Esophagus squamous epithelium (tissue), 5 donors: ENCODE measurements at regions of chr12 and their contacts with region 1.

Region 1: DNA sequence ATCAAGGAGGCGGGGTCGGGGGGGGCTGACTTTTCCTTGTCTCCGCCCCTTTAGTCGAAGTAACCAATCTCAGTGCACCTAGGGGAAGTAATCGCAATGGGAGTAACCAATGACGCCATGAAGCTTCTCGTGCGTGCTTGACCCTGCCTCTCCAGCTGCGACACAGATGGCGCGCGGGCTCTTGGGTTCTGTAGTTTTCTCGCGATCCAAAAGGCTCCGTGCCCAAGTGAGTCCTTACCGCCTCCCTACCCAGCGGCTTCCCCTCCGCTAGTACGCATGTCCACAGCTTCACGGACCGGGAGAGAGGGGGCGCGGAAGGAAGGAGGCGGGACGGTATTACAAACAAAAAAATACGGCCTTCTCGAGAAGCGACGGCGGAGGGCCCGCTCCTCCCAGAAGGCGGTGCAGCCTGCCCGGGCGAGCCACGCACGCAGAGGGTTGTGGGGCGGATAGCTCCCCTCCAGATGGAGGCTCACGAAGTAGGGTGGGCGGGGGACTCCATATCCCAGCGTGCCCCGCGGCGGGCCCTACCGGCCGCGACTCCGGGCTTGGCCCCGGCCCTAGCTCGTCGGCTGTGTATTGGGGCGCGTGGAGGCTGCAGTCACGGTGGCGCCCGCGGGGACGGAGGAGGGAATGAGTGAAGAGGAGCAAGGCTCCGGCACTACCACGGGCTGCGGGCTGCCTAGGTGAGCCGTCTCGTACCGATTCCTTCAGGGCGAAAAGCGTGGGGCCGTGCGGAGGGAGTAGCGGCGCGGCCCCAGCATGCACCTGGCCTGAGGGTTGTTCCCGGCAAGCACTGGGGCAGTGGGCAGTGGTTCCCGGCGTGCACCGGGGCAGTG is at the start of gene TARBP2:
- DNase-seq: peak; percentile 94
- H3K4me3 ChIP-seq: peak within 1 kb of the TSS; percentile 66 to 88 (median 74)
- H3K27ac ChIP-seq: peak within 1 kb of the TSS; percentile 89 to 99 (median 98)
- H3K4me1 ChIP-seq: peaks cover 26 to 73% (median 32%) of the 10 kb centered on the region in 3 donors
- H3K27me3 ChIP-seq: no peaks in the 10 kb centered on the region
- CTCF ChIP-seq: peak in 3 of 6 experiments; percentile 13 to 30 (median 28)
- POLR2A ChIP-seq: peak in 2 of 4 donors; percentile 34 to 56
- total RNA-seq, gene TARBP2: 19.5 to 25.9 (median 22.7) TPM

Region 2: DNA sequence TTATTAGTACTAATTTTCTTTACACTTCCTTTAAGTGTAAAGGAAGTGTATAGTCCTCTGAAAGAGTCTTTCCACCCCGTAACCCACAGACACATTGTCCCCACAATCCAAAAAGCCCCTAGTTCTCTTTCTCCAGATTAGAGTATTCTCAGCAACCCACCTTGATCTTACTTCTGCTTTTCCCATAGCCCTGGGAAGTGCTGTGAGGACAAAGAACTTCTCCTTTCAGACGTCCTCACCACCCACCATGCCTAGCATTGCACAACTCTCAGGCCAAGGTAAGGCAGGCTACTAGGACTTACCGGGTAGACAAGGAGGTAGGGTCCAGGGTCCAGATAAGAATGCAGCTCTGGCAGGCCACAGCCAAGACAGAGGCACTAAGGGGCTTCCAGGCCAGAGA is 187.0 kb before region 1 on chr12:
- intact Hi-C with region 1: no loop called
- DNase-seq: no peak
- H3K4me3 ChIP-seq: no peak overlapping the region
- H3K27ac ChIP-seq: no peak overlapping the region
- H3K4me1 ChIP-seq: no peaks in the 10 kb centered on the region
- H3K27me3 ChIP-seq: no peaks in the 10 kb centered on the region
- CTCF ChIP-seq: no peak
- POLR2A ChIP-seq: no peak

Region 3: DNA sequence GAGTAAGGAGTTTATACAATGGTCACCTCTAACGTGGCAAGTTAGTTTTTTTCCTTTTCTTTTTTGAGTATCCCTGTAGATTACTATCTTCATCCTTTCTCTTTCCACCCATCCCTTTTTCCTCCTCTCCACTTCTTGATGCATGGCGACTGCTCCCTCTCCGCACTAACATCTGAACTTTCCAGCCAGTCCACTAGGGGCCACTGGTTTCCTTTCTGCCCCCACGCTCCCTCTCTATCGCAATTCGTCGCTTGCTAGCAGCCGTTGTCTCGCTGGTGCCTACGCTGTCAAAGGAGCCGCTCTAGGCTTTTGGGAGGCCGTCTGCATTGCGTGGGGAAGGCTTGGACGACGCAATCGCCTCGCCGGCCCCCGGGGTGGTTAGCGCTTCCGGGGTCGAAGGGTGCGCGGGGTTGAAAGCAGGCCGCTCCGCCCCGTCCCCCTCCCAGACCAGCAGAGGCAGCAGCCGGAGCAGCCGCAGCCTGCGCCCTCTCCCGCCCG is 49.3 kb before region 1 on chr12 and contains the start of gene PCBP2:
- intact Hi-C with region 1: loop called (anchors 10 kb)
- DNase-seq: peak; percentile 87
- H3K4me3 ChIP-seq: peak within 1 kb of the TSS; percentile 78 to 90 (median 85)
- H3K27ac ChIP-seq: peak within 1 kb of the TSS; percentile 95 to 99 (median 98)
- H3K4me1 ChIP-seq: peaks cover 12 to 41% (median 20%) of the 10 kb centered on the region in 3 donors
- H3K27me3 ChIP-seq: no peaks in the 10 kb centered on the region
- CTCF ChIP-seq: peak; percentile 77 to 96 (median 95)
- POLR2A ChIP-seq: peak in 3 of 4 donors; percentile 62 to 76 (median 67)
- total RNA-seq, gene PCBP2: 202 to 400 (median 287) TPM